ENCODE measurements at regions of chr10 and their contacts with region 1.

Region 1: GRCh38 chr10:24318517-24318916 is 109.6 kb downstream of the KIAA1217 start:
- DNase-seq: peak in 1 of 2 experiments; percentile 46
- H3K4me3 ChIP-seq: no peak overlapping the region
- H3K4me3 Mint-ChIP-seq: no peak overlapping the region
- H3K27ac Mint-ChIP-seq: peak overlapping the region; percentile 54
- H3K4me1 ChIP-seq: peaks cover 18% of the 10 kb centered on the region
- H3K4me1 Mint-ChIP-seq: peaks cover 19% of the 10 kb centered on the region
- H3K27me3 ChIP-seq: no peaks in the 10 kb centered on the region
- H3K27me3 Mint-ChIP-seq: no peaks in the 10 kb centered on the region
- CTCF ChIP-seq: no peak

Region 2: GRCh38 chr10:24153031-24153430 is 165.5 kb before region 1 on chr10:
- CTCF ChIA-PET with region 1: no interaction called
- POLR2A ChIA-PET with region 1: no interaction called
- intact Hi-C with region 1: no loop called
- DNase-seq: no peak
- H3K4me3 ChIP-seq: no peak overlapping the region
- H3K4me3 Mint-ChIP-seq: no peak overlapping the region
- H3K27ac Mint-ChIP-seq: no peak overlapping the region
- H3K4me1 ChIP-seq: no peaks in the 10 kb centered on the region
- H3K4me1 Mint-ChIP-seq: no peaks in the 10 kb centered on the region
- H3K27me3 ChIP-seq: no peaks in the 10 kb centered on the region
- H3K27me3 Mint-ChIP-seq: peaks cover 8% of the 10 kb centered on the region
- CTCF ChIP-seq: no peak

Region 3: DNA sequence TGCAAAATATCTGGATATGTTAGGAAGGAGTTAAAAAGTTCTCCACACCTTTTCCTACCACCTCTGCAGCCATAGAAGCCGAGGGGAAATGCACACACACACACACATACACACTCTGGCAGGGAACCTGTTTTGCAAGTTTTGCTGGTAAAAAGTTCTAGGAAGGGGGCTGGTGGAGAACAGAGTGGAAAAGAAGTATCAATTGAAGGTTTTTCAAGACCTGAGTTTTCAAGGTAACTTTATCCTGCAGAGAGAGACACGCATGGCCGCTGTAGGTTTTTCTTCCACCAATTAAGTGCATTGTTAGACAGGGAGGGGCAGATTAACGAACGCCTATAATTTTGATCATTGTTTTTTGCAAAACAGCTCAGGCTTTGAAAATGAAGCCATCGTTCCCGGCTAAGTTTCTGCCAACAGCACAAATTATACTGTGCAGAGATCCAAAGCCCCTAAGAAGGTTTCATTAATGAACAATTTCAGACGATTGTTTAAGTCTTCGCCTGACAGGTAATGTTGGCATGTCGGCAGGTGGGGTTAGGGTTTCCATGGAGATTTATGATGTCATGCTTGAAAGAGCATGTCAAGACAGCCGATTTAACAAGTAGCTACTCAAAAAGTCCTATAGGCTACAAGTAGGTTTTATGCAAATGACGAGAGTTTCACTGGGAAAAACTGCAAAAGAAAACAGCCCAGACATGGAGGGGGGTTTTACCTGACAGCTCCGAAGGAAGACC is 79.8 kb before region 1 on chr10:
- CTCF ChIA-PET with region 1: interaction called, 4 read pairs
- POLR2A ChIA-PET with region 1: no interaction called
- intact Hi-C with region 1: loop called (anchors 2 kb)
- DNase-seq: peak; percentile 87 to 88
- H3K4me3 ChIP-seq: peak overlapping the region; percentile 35
- H3K4me3 Mint-ChIP-seq: peak overlapping the region; percentile 89
- H3K27ac Mint-ChIP-seq: peak overlapping the region; percentile 97
- H3K4me1 ChIP-seq: peaks cover 44% of the 10 kb centered on the region
- H3K4me1 Mint-ChIP-seq: peaks cover 74% of the 10 kb centered on the region
- H3K27me3 ChIP-seq: no peaks in the 10 kb centered on the region
- H3K27me3 Mint-ChIP-seq: no peaks in the 10 kb centered on the region
- CTCF ChIP-seq: no peak

Region 4: GRCh38 chr10:24299578-24300260 is 18.8 kb before region 1 on chr10:
- CTCF ChIA-PET with region 1: no interaction called
- POLR2A ChIA-PET with region 1: interaction called, 3 read pairs
- intact Hi-C with region 1: loop called (anchors 1 kb)
- DNase-seq: no peak
- H3K4me3 ChIP-seq: no peak overlapping the region
- H3K4me3 Mint-ChIP-seq: no peak overlapping the region
- H3K27ac Mint-ChIP-seq: no peak overlapping the region
- H3K4me1 ChIP-seq: no peaks in the 10 kb centered on the region
- H3K4me1 Mint-ChIP-seq: no peaks in the 10 kb centered on the region
- H3K27me3 ChIP-seq: no peaks in the 10 kb centered on the region
- H3K27me3 Mint-ChIP-seq: no peaks in the 10 kb centered on the region
- CTCF ChIP-seq: no peak

Region 5: GRCh38 chr10:24360282-24361127 is 42.0 kb after region 1 on chr10:
- CTCF ChIA-PET with region 1: no interaction called
- POLR2A ChIA-PET with region 1: no interaction called
- intact Hi-C with region 1: loop called (anchors 2 kb)
- DNase-seq: peak; percentile 75 to 84
- H3K4me3 ChIP-seq: no peak overlapping the region
- H3K4me3 Mint-ChIP-seq: no peak overlapping the region
- H3K27ac Mint-ChIP-seq: peak overlapping the region; percentile 36
- H3K4me1 ChIP-seq: no peaks in the 10 kb centered on the region
- H3K4me1 Mint-ChIP-seq: peaks cover 7% of the 10 kb centered on the region
- H3K27me3 ChIP-seq: no peaks in the 10 kb centered on the region
- H3K27me3 Mint-ChIP-seq: no peaks in the 10 kb centered on the region
- CTCF ChIP-seq: peak; percentile 91 to 92